CD8-positive, alpha-beta T cell (primary cell): ENCODE measurements at regions of chr10 and their contacts with region 1.

Region 1: DNA sequence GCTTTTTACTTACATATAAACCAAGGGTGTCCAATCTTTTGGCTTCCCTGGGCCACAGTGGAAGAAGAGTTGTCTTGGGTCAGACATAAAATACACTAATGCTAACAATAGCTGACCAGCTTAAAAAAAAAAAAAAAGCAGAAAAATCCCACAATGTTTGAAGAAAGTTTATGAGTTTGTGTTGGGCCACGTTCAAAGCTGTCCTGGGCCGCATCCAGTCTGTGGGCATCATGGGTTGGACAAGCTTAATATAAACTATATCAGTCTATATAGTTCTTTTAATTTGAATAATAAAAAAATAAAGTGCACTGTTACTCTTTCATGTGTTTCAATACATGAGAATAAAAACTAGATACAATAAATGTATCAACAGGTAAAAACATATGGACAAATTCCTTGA is 179.9 kb downstream of the DNAJC1 start:
- DNase-seq: no peak
- ATAC-seq: no peak
- H3K4me3 ChIP-seq: no peak overlapping the region
- H3K4me3 Mint-ChIP-seq: no peak overlapping the region
- H3K27ac ChIP-seq: no peak overlapping the region
- H3K27ac Mint-ChIP-seq: no peak overlapping the region
- H3K4me1 ChIP-seq: no peaks in the 10 kb centered on the region
- H3K4me1 Mint-ChIP-seq: no peaks in the 10 kb centered on the region
- H3K27me3 ChIP-seq: no peaks in the 10 kb centered on the region
- H3K27me3 Mint-ChIP-seq: no peaks in the 10 kb centered on the region
- CTCF ChIP-seq: no peak

Region 2: DNA sequence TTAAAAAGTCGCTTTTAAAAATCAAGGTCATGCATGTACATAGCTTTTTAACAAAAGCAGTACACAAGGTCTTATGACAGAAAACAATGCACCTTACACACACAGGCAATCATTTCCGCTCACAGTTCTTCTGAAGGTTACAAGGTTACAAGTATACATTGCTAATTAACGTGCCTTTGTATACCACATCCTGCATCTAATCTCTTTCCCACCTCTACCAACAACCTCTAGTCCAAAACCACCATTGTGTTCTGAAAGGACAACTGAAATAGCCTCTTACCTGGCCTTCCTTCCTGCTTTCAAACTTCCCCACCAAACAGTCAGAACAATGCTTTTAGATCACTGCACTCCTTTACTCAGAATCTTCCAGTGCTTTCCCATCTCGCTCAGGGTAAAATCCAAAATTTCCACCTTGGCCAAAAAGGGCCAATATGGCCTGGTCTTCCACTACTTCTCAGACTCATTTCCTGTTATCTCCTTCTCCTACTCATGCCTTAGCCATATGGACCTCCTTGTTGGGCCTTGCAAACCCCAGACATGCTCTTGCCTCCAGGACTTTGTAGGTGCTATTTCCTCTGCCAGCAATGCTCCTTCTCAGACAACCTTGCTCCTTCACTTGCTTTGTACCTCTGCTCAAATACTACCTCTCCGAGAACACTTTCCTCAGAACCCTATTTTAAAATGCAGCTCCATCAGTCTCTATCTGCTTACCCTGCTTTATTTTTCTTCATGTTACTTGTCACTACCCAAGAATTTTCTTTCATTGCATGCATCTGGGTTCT is 25.4 kb before region 1 on chr10:
- CTCF ChIA-PET with region 1: no interaction called
- POLR2A ChIA-PET with region 1: no interaction called
- intact Hi-C with region 1: no loop called
- DNase-seq: peak in 2 of 9 experiments; percentile 10 to 50
- ATAC-seq: peak; percentile 79
- H3K4me3 ChIP-seq: no peak overlapping the region
- H3K4me3 Mint-ChIP-seq: no peak overlapping the region
- H3K27ac ChIP-seq: peak overlapping the region in 1 of 2 experiments; percentile 36
- H3K27ac Mint-ChIP-seq: peak overlapping the region; percentile 85
- H3K4me1 ChIP-seq: peaks cover 7% of the 10 kb centered on the region
- H3K4me1 Mint-ChIP-seq: peaks cover 15% of the 10 kb centered on the region
- H3K27me3 ChIP-seq: no peaks in the 10 kb centered on the region
- H3K27me3 Mint-ChIP-seq: no peaks in the 10 kb centered on the region
- CTCF ChIP-seq: no peak

Region 3: DNA sequence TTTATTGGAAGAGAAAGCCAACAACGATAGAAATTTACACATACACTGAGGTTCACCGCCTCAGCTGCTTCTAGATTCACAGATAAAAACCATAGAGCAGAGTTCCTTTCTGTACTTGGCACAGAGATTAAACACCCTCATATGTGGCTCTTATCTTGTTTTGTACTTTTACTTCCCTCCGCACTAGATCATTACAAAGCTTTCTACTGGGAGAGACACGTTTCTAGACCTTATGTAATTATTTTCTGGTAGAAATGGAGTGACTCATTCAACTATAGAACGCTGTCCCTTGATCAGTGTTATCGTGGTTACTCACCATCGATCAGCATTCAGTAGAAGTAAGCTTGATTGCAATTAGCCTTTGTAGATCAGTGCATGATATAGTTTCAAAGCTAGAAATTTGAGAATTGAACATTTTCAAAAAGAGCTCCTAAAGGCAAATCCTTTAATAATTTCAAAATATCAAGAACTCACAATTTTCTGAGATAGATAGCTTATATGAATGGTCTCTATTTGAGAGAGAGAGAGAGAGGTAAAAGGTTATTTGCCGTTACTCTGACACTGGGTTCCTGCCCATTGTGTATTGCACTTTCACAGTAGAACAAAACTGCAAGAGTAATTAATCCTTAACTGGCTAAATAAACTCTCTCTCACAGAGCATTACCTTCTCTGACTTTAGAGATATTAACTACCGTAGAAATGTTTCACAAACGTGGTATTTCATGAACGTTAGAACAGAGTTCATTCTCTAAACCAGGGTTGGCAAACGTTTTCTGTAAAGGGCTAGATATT is 206.0 kb after region 1 on chr10:
- CTCF ChIA-PET with region 1: no interaction called
- POLR2A ChIA-PET with region 1: interaction called, 10 read pairs
- intact Hi-C with region 1: no loop called
- DNase-seq: peak in 2 of 9 experiments; percentile 8 to 19
- ATAC-seq: peak; percentile 58
- H3K4me3 ChIP-seq: no peak overlapping the region
- H3K4me3 Mint-ChIP-seq: no peak overlapping the region
- H3K27ac ChIP-seq: no peak overlapping the region
- H3K27ac Mint-ChIP-seq: peak overlapping the region; percentile 14
- H3K4me1 ChIP-seq: peaks cover 4% of the 10 kb centered on the region
- H3K4me1 Mint-ChIP-seq: peaks cover 10% of the 10 kb centered on the region
- H3K27me3 ChIP-seq: peaks cover 0 to 3% of the 10 kb centered on the region in 2 experiments
- H3K27me3 Mint-ChIP-seq: peaks cover 14% of the 10 kb centered on the region
- CTCF ChIP-seq: no peak